Naive thymus-derived CD4-positive, alpha-beta T cell (primary cell): ENCODE measurements at regions of chr10 and their contacts with region 1.

Region 1: GRCh38 chr10:59625721-59626522 is 83.7 kb downstream of the SLC16A9 start:
- DNase-seq: peak in 8 of 9 donors; percentile 28 to 73 (median 64)
- ATAC-seq: peak; percentile 84
- H3K4me3 ChIP-seq: no peak overlapping the region
- H3K4me3 Mint-ChIP-seq: no peak overlapping the region
- H3K27ac ChIP-seq: no peak overlapping the region
- H3K27ac Mint-ChIP-seq: peak overlapping the region in 1 of 9 donors; percentile 32
- H3K4me1 ChIP-seq: no peaks in the 10 kb centered on the region
- H3K4me1 Mint-ChIP-seq: peaks cover 0 to 7% (median 3%) of the 10 kb centered on the region in 7 donors
- H3K27me3 ChIP-seq: no peaks in the 10 kb centered on the region
- H3K27me3 Mint-ChIP-seq: peaks cover 0 to 21% (median 1%) of the 10 kb centered on the region in 5 donors

Region 2: GRCh38 chr10:58952747-58953466 is 673.0 kb before region 1 on chr10:
- CTCF ChIA-PET with region 1: no interaction called
- POLR2A ChIA-PET with region 1: no interaction called
- intact Hi-C with region 1: loop called in 1 of 2 experiments (anchors 1 kb)
- DNase-seq: no peak
- ATAC-seq: peak; percentile 40
- H3K4me3 ChIP-seq: no peak overlapping the region
- H3K4me3 Mint-ChIP-seq: no peak overlapping the region
- H3K27ac ChIP-seq: no peak overlapping the region
- H3K27ac Mint-ChIP-seq: no peak overlapping the region
- H3K4me1 ChIP-seq: no peaks in the 10 kb centered on the region
- H3K4me1 Mint-ChIP-seq: no peaks in the 10 kb centered on the region
- H3K27me3 ChIP-seq: no peaks in the 10 kb centered on the region
- H3K27me3 Mint-ChIP-seq: peaks cover 0 to 12% (median 4%) of the 10 kb centered on the region in 5 donors

Region 3: DNA sequence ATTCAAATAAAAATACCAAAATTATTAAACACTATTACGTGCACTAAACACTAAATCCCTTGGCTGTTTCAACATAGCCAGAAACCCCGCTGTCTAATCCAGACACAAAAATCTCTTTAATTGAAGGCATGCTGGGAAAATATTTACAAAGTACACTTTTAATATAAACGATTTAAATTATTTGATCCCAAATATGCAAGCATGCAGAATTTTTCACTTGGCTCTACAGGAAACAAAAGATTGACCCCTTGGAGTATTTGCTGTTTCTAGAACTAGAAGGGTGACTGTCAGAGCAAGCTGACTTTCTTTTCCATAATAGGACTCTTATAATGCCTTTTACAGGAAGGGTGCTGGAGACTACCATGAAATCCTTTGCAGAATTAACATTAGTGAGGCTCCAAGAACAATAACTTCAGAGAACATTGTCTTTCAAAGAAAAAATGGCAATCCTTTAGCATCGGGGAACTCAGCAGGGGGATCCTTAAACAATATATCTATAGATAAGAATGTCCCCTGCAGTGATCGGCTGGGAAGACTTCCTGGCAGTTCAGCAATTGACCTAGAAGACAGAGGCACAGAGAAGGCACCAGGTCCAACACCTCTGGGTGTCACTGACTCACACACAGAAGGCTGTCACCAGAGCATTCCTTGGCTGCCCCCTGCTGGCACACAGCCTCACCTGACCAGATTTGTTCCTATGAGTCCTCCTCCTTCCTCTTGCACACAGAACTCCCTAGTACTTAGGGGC is 183.1 kb after region 1 on chr10:
- CTCF ChIA-PET with region 1: interaction called, 4 read pairs
- POLR2A ChIA-PET with region 1: no interaction called
- intact Hi-C with region 1: loop called (anchors 1 kb)
- DNase-seq: peak in 8 of 9 donors; percentile 14 to 66 (median 21)
- ATAC-seq: peak; percentile 87
- H3K4me3 ChIP-seq: no peak overlapping the region
- H3K4me3 Mint-ChIP-seq: no peak overlapping the region
- H3K27ac ChIP-seq: no peak overlapping the region
- H3K27ac Mint-ChIP-seq: peak overlapping the region in 2 of 9 donors; percentile 12 to 47
- H3K4me1 ChIP-seq: no peaks in the 10 kb centered on the region
- H3K4me1 Mint-ChIP-seq: peaks cover 0 to 5% (median 0%) of the 10 kb centered on the region in 7 donors
- H3K27me3 ChIP-seq: no peaks in the 10 kb centered on the region
- H3K27me3 Mint-ChIP-seq: no peaks in the 10 kb centered on the region

Region 4: DNA sequence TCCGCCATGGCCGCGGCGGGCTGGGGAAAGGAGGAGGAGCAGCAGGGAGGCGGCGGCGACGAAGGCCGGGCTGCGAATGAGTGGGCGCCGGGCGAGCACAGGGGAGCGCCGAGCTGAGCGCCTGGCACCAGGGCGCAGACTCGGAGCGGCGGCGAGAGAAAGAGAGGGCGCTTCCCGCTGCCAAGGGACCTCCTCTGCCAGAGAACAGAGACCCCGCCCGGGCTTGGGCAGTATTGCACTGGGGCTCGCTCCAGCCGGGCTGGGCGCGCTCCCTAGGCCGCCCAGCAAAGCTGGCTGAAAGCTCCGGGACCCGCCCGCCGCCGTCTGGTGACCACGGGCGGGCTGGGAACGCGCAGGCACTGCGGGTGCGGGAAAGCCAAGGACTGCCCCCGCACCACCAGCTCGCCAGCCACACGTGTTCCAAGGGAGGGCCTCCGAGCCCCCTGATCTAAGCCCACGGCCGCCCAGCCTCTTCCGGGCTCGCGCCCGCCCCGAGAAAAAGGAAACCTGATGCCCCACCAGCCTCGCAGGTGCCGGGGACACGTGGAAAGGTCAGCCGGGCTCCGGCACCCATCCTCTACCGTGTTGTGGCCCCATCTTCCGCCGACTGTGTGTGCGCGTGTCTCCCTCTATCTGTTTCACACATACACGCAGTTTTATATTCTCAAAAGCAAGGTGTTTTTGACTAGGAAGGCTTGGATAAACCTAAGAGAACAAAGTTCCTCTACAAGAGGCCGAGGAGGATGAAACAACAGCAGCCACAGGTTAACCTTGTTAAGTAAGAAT is 280.7 kb after region 1 on chr10 and contains the start of gene CCDC6:
- CTCF ChIA-PET with region 1: no interaction called
- POLR2A ChIA-PET with region 1: no interaction called
- intact Hi-C with region 1: loop called (anchors 1 kb)
- DNase-seq: peak; percentile 87 to 92 (median 91)
- ATAC-seq: peak; percentile 92
- H3K4me3 ChIP-seq: peak within 1 kb of the TSS; percentile 72
- H3K4me3 Mint-ChIP-seq: peak within 1 kb of the TSS; percentile 91 to 99 (median 96)
- H3K27ac ChIP-seq: peak within 1 kb of the TSS; percentile 85
- H3K27ac Mint-ChIP-seq: peak within 1 kb of the TSS; percentile 92 to 98 (median 97)
- H3K4me1 ChIP-seq: peaks cover 22 to 36% of the 10 kb centered on the region in 2 donors
- H3K4me1 Mint-ChIP-seq: peaks cover 47 to 71% (median 64%) of the 10 kb centered on the region in 7 donors
- H3K27me3 ChIP-seq: no peaks in the 10 kb centered on the region
- H3K27me3 Mint-ChIP-seq: no peaks in the 10 kb centered on the region
- total RNA-seq, gene CCDC6: 19.7 to 34.3 (median 21.4) TPM

Region 5: DNA sequence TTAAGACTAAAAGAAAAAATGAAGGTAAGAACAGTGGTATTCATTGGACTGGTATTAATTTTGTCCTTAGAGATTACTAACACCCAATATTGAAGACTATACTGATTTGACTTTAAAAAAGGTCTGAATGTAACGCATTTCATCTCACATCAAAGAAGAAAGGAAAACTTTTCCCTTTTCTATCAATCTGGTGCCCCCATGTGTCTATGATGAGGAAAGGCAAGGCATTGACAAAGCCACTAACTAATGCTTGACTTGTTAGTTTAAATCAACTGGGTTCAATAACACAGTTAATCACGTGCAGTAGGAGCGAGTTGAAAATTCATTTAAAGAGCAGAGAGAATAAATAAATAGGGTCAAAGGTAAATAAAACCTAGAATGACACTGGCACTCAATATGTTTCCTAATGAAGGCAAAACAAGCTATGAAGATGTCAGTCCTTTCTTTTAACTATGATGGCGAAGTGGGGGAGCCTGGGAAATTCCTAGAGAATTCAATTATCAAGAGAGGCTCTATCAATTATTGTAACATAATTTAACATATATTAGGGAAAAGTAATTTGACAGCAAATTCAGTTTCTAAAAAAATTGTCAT is 582.9 kb after region 1 on chr10:
- CTCF ChIA-PET with region 1: interaction called, 4 read pairs
- POLR2A ChIA-PET with region 1: no interaction called
- intact Hi-C with region 1: loop called (anchors 1 kb)
- DNase-seq: no peak
- ATAC-seq: no peak
- H3K4me3 ChIP-seq: no peak overlapping the region
- H3K4me3 Mint-ChIP-seq: no peak overlapping the region
- H3K27ac ChIP-seq: no peak overlapping the region
- H3K27ac Mint-ChIP-seq: peak overlapping the region in 1 of 9 donors; percentile 72
- H3K4me1 ChIP-seq: peaks cover 0 to 11% of the 10 kb centered on the region in 2 donors
- H3K4me1 Mint-ChIP-seq: peaks cover 12 to 37% (median 28%) of the 10 kb centered on the region in 7 donors
- H3K27me3 ChIP-seq: no peaks in the 10 kb centered on the region
- H3K27me3 Mint-ChIP-seq: no peaks in the 10 kb centered on the region

Region 6: GRCh38 chr10:60760749-60761148 is 1134.8 kb after region 1 on chr10:
- CTCF ChIA-PET with region 1: no interaction called
- POLR2A ChIA-PET with region 1: no interaction called
- intact Hi-C with region 1: loop called in 1 of 2 experiments (anchors 10 kb)
- DNase-seq: no peak
- ATAC-seq: no peak
- H3K4me3 ChIP-seq: no peak overlapping the region
- H3K4me3 Mint-ChIP-seq: no peak overlapping the region
- H3K27ac ChIP-seq: no peak overlapping the region
- H3K27ac Mint-ChIP-seq: no peak overlapping the region
- H3K4me1 ChIP-seq: no peaks in the 10 kb centered on the region
- H3K4me1 Mint-ChIP-seq: peaks cover 0 to 6% (median 0%) of the 10 kb centered on the region in 7 donors
- H3K27me3 ChIP-seq: no peaks in the 10 kb centered on the region
- H3K27me3 Mint-ChIP-seq: peaks cover 8 to 18% (median 9%) of the 10 kb centered on the region in 5 donors